SK-MEL-5 (cell line): ENCODE measurements at regions of chr12 and their contacts with region 1.

Region 1: DNA sequence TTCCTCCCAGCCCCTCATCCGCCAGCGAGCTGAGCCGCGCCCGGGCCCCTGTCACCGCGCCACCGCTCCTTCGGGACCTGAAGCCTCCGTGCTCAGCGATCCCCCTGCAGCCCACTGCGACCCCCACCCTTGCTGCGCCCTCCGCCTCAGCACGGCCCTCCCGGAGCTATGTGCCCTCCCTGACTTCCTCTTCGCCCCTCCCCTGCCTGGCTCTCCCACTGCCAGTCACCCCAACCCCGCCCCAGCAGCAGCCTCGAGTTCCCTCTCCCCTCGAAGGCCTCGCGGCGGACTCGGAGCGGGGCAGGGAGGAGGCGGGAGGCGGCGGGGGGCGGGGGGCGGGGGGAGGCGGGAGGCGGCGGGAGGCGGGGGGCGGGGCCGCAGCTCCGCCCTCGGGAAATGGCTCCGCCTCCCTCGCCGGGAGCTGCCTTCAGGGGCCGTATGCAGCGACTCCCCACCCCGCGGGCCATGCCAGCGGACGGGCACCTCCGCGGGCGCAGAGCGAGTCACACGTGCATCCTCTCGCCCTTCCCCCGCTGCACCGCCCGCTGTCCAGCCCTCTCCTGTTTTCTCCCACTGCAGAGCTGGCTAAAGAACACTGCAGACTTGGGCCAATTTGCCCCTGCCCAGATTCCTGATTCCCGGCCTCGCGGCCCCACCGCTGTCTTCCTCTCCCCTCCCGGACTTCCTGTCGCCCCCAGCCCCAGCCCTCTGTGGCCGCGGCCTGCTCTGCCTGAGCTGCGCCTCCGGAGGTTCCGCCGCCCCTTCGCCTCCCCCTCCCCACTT is 29.1 kb upstream of the ADIPOR2 start:
- DNase-seq: peak; percentile 67

Region 2: GRCh38 chr12:1443421-1444141 is 218.2 kb before region 1 on chr12:
- in situ Hi-C with region 1: no loop called
- DNase-seq: no peak

Region 3: GRCh38 chr12:1728824-1729223 is 67.1 kb after region 1 on chr12:
- in situ Hi-C with region 1: no loop called
- DNase-seq: peak; percentile 89

Region 4: DNA sequence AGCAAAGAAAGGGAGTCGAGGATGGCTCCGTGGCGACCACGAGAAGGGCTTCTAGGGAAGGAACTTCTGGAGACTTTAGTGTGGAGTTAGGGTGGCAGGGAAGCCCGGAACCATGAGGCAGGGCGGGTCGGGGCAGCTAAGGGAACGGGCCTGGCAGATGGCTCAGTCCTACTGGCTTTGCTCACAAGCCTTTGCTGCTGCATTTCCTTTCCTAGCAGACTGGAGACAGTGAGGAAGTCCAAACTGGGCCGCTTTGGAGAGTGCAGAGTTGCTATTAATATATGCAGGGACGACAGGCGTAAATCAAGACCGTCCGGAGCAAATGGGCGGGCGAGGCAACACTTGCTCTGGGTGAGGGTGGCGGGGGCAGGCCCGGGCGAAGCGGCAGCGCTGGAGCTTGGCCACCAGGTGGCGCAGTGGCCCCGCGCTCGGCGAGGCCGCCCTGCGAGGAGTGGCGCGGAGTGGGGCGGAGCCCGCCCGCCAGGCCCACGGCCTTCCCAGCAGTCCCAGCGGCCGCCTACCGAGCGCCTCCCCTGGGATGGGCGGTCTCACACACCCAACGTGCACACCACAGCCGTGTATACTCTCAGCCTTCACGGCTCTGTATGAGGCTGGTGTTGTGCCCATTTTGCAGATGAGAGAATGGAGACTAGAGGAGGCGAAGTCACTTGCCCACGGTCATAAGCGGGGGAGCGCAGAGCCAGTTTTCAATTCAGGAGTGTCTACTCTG is 134.2 kb after region 1 on chr12:
- in situ Hi-C with region 1: loop called (anchors 25 kb)
- DNase-seq: peak; percentile 87